Natural killer cell (primary cell): ENCODE measurements at regions of chr2 and their contacts with region 1.

Region 1: GRCh38 chr2:168455648-168456520 is at the start of gene CERS6:
- DNase-seq: peak; percentile 79 to 81
- ATAC-seq: peak; percentile 96 to 97 (median 96)
- H3K4me3 ChIP-seq: peak within 1 kb of the TSS; percentile 92
- H3K4me3 Mint-ChIP-seq: no peak within 1 kb of the TSS
- H3K27ac ChIP-seq: peak within 1 kb of the TSS; percentile 43
- H3K27ac Mint-ChIP-seq: peak within 1 kb of the TSS in 1 of 2 donors; percentile 27
- H3K4me1 ChIP-seq: peaks cover 15% of the 10 kb centered on the region
- H3K4me1 Mint-ChIP-seq: peaks cover 27% of the 10 kb centered on the region in 2 donors
- H3K27me3 ChIP-seq: no peaks in the 10 kb centered on the region
- H3K27me3 Mint-ChIP-seq: no peaks in the 10 kb centered on the region
- CTCF ChIP-seq: no peak
- total RNA-seq, gene CERS6: 9.1 to 13.5 (median 11.8) TPM

Region 2: GRCh38 chr2:168490015-168490874 is 34.4 kb after region 1 on chr2:
- intact Hi-C with region 1: loop called (anchors 5 kb)
- DNase-seq: peak in 1 of 2 donors; percentile 53
- ATAC-seq: peak; percentile 80 to 91 (median 87)
- H3K4me3 ChIP-seq: peak overlapping the region; percentile 10
- H3K4me3 Mint-ChIP-seq: peak overlapping the region; percentile 85
- H3K27ac ChIP-seq: peak overlapping the region; percentile 66
- H3K27ac Mint-ChIP-seq: peak overlapping the region; percentile 83 to 87
- H3K4me1 ChIP-seq: peaks cover 14% of the 10 kb centered on the region
- H3K4me1 Mint-ChIP-seq: peaks cover 32 to 54% of the 10 kb centered on the region in 2 donors
- H3K27me3 ChIP-seq: no peaks in the 10 kb centered on the region
- H3K27me3 Mint-ChIP-seq: no peaks in the 10 kb centered on the region
- CTCF ChIP-seq: no peak

Region 3: DNA sequence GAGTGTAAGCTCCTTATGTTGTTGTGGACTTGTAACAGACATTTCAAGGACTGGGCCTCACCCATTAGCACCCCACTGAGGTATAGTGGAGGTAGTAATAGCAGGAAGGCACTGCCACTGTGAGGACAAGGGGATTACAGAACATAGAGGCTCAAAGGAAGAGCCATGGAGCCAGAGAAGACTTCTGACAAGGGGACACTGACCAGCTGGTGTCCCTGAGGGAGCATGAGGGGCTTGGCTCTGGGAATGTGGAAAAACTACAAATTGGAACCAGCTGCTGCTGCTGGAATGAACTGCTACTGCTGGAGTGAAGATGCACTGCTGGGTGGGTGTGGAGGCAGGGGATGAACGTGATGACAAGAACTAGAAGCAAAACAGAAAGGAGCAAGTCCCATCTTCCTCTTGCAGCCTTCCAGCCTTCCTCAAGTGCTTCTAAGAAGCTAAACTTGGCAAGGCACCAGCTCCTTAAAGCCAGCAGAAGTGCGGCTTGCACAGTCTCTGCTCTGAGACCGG is 179.2 kb after region 1 on chr2:
- intact Hi-C with region 1: no loop called
- DNase-seq: no peak
- ATAC-seq: peak in 1 of 3 donors; percentile 24
- H3K4me3 ChIP-seq: no peak overlapping the region
- H3K4me3 Mint-ChIP-seq: no peak overlapping the region
- H3K27ac ChIP-seq: no peak overlapping the region
- H3K27ac Mint-ChIP-seq: peak overlapping the region in 1 of 2 donors; percentile 46
- H3K4me1 ChIP-seq: no peaks in the 10 kb centered on the region
- H3K4me1 Mint-ChIP-seq: peaks cover 8 to 28% of the 10 kb centered on the region in 2 donors
- H3K27me3 ChIP-seq: no peaks in the 10 kb centered on the region
- H3K27me3 Mint-ChIP-seq: no peaks in the 10 kb centered on the region
- CTCF ChIP-seq: no peak